ENCODE measurements at regions of chr15 and their contacts with region 1.

Region 1: GRCh38 chr15:34987985-34988873 is at the start of gene ZNF770:
- DNase-seq: peak; percentile 67 to 91 (median 85)
- ATAC-seq: peak; percentile 95
- H3K4me3 ChIP-seq: peak within 1 kb of the TSS; percentile 99
- H3K4me3 Mint-ChIP-seq: peak within 1 kb of the TSS; percentile 93 to 100 (median 98)
- H3K27ac ChIP-seq: peak within 1 kb of the TSS; percentile 97
- H3K27ac Mint-ChIP-seq: peak within 1 kb of the TSS; percentile 96 to 100 (median 99)
- H3K4me1 ChIP-seq: peaks cover 22 to 25% of the 10 kb centered on the region in 2 donors
- H3K4me1 Mint-ChIP-seq: peaks cover 20 to 55% (median 45%) of the 10 kb centered on the region in 7 donors
- H3K27me3 ChIP-seq: no peaks in the 10 kb centered on the region
- H3K27me3 Mint-ChIP-seq: no peaks in the 10 kb centered on the region
- total RNA-seq, gene ZNF770: 32.5 to 69.9 (median 50.2) TPM

Region 2: GRCh38 chr15:34101366-34102175 is 886.7 kb before region 1 on chr15 and contains the starts of genes EMC7 and PGBD4:
- CTCF ChIA-PET with region 1: no interaction called
- POLR2A ChIA-PET with region 1: interaction called, 6 read pairs
- intact Hi-C with region 1: loop called in 1 of 2 experiments (anchors 1 kb)
- DNase-seq: peak; percentile 98 to 99 (median 99)
- ATAC-seq: peak; percentile 99
- H3K4me3 ChIP-seq: peak within 1 kb of the TSS; percentile 66
- H3K4me3 Mint-ChIP-seq: peak within 1 kb of the TSS; percentile 91 to 100 (median 96)
- H3K27ac ChIP-seq: peak within 1 kb of the TSS; percentile 96
- H3K27ac Mint-ChIP-seq: peak within 1 kb of the TSS; percentile 97 to 100 (median 98)
- H3K4me1 ChIP-seq: peaks cover 16 to 27% of the 10 kb centered on the region in 2 donors
- H3K4me1 Mint-ChIP-seq: peaks cover 15 to 56% (median 45%) of the 10 kb centered on the region in 7 donors
- H3K27me3 ChIP-seq: no peaks in the 10 kb centered on the region
- H3K27me3 Mint-ChIP-seq: peaks cover 0 to 3% (median 0%) of the 10 kb centered on the region in 5 donors
- total RNA-seq, gene EMC7: 30.1 to 65.1 (median 36.9) TPM
- total RNA-seq, gene PGBD4: 3.2 to 6.5 (median 4.2) TPM

Measured in naive thymus-derived CD4-positive, alpha-beta T cell (primary cell).